ENCODE measurements at regions of chr15 and their contacts with region 1.

Region 1: GRCh38 chr15:90482124-90483011 is 47.4 kb upstream of the CRTC3 start:
- DNase-seq: peak in 30 of 35 experiments; percentile 7 to 68 (median 34)
- ATAC-seq: peak in 1 of 4 experiments; percentile 57
- H3K4me3 ChIP-seq: no peak overlapping the region
- H3K4me3 Mint-ChIP-seq: no peak overlapping the region
- H3K27ac ChIP-seq: no peak overlapping the region
- H3K27ac Mint-ChIP-seq: no peak overlapping the region
- H3K4me1 ChIP-seq: peaks cover 0 to 13% of the 10 kb centered on the region in 2 experiments
- H3K4me1 Mint-ChIP-seq: peaks cover 22 to 49% (median 35%) of the 10 kb centered on the region in 3 donors
- H3K27me3 ChIP-seq: no peaks in the 10 kb centered on the region
- H3K27me3 Mint-ChIP-seq: no peaks in the 10 kb centered on the region

Region 2: DNA sequence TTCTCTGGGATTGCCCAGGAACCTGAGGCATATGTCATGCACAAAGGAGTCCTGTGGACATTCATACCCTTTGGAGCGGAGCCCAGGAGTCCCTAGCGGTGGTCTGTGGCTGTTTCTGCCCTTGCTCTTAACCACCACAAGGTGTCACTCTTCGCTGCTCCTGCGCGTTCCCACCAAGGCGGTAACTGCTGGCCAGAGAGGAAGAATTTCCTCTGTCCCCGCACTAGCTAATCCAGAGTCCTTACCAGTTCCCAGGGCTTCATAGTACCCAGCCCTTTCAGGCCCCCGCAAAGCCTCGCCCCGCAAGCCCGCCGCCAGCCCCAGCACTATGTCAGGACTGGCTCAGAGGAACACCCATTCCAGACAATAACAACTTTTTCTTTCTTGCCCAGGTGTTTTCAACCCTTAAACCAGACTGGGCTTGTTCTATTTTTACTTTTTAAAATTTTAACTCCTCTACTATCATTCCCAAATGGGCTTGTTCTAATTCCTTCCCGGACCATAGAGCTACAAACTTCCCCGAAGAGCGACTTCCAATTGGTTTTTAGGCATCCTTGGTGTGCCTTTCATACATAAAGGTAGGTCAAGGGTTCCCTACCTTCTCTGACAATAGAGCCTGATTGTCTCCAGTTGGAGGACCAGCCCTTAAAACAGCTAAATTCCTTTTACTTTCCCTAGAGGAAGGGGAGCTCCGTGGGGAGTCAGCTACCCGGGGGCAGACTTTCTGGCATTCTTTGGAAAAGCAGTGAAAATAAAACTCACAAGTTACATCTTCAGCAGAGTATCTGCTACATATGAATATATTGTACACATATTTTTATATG is 162.1 kb before region 1 on chr15:
- CTCF ChIA-PET with region 1: interaction called, 15 to 42 read pairs
- POLR2A ChIA-PET with region 1: interaction called in 1 of 2 experiments, 7 read pairs
- DNase-seq: peak; percentile 24 to 87 (median 56)
- ATAC-seq: peak; percentile 96 to 99 (median 96)
- H3K4me3 ChIP-seq: peak overlapping the region in 1 of 2 donors; percentile 23
- H3K4me3 Mint-ChIP-seq: no peak overlapping the region
- H3K27ac ChIP-seq: no peak overlapping the region
- H3K27ac Mint-ChIP-seq: peak overlapping the region in 1 of 2 donors; percentile 17
- H3K4me1 ChIP-seq: peaks cover 4 to 6% of the 10 kb centered on the region in 2 experiments
- H3K4me1 Mint-ChIP-seq: peaks cover 6 to 11% (median 6%) of the 10 kb centered on the region in 3 donors
- H3K27me3 ChIP-seq: peaks cover 0 to 3% of the 10 kb centered on the region in 2 experiments
- H3K27me3 Mint-ChIP-seq: peaks cover 0 to 3% of the 10 kb centered on the region in 2 donors

Region 3: GRCh38 chr15:90362936-90363212 is 119.5 kb before region 1 on chr15:
- CTCF ChIA-PET with region 1: interaction called, 9 to 52 read pairs
- POLR2A ChIA-PET with region 1: no interaction called
- DNase-seq: no peak
- ATAC-seq: no peak
- H3K4me3 ChIP-seq: no peak overlapping the region
- H3K4me3 Mint-ChIP-seq: no peak overlapping the region
- H3K27ac ChIP-seq: no peak overlapping the region
- H3K27ac Mint-ChIP-seq: peak overlapping the region in 1 of 2 donors; percentile 44
- H3K4me1 ChIP-seq: peaks cover 11 to 14% of the 10 kb centered on the region in 2 experiments
- H3K4me1 Mint-ChIP-seq: peaks cover 15 to 26% (median 20%) of the 10 kb centered on the region in 3 donors
- H3K27me3 ChIP-seq: no peaks in the 10 kb centered on the region
- H3K27me3 Mint-ChIP-seq: no peaks in the 10 kb centered on the region

Region 4: GRCh38 chr15:90432253-90432652 is 50.1 kb before region 1 on chr15:
- CTCF ChIA-PET with region 1: no interaction called
- POLR2A ChIA-PET with region 1: no interaction called
- DNase-seq: no peak
- ATAC-seq: no peak
- H3K4me3 ChIP-seq: no peak overlapping the region
- H3K4me3 Mint-ChIP-seq: no peak overlapping the region
- H3K27ac ChIP-seq: no peak overlapping the region
- H3K27ac Mint-ChIP-seq: peak overlapping the region in 1 of 2 donors; percentile 12
- H3K4me1 ChIP-seq: no peaks in the 10 kb centered on the region
- H3K4me1 Mint-ChIP-seq: peaks cover 37 to 43% (median 38%) of the 10 kb centered on the region in 3 donors
- H3K27me3 ChIP-seq: no peaks in the 10 kb centered on the region
- H3K27me3 Mint-ChIP-seq: no peaks in the 10 kb centered on the region

Region 5: GRCh38 chr15:90665288-90666134 is 183.1 kb after region 1 on chr15:
- CTCF ChIA-PET with region 1: no interaction called
- POLR2A ChIA-PET with region 1: interaction called in 1 of 2 experiments, 10 read pairs
- DNase-seq: peak in 22 of 35 experiments; percentile 9 to 45 (median 21)
- ATAC-seq: peak; percentile 47 to 59 (median 52)
- H3K4me3 ChIP-seq: peak overlapping the region; percentile 65 to 74
- H3K4me3 Mint-ChIP-seq: peak overlapping the region; percentile 72 to 87 (median 74)
- H3K27ac ChIP-seq: peak overlapping the region; percentile 49
- H3K27ac Mint-ChIP-seq: peak overlapping the region in 1 of 2 donors; percentile 46
- H3K4me1 ChIP-seq: peaks cover 20 to 45% of the 10 kb centered on the region in 2 experiments
- H3K4me1 Mint-ChIP-seq: peaks cover 42 to 50% (median 50%) of the 10 kb centered on the region in 3 donors
- H3K27me3 ChIP-seq: peaks cover 0 to 41% of the 10 kb centered on the region in 2 experiments
- H3K27me3 Mint-ChIP-seq: peaks cover 0 to 13% of the 10 kb centered on the region in 2 donors

Region 6: GRCh38 chr15:90691982-90692773 is 209.8 kb after region 1 on chr15:
- CTCF ChIA-PET with region 1: interaction called in 1 of 2 experiments, 20 read pairs
- POLR2A ChIA-PET with region 1: no interaction called
- DNase-seq: no peak
- ATAC-seq: no peak
- H3K4me3 ChIP-seq: no peak overlapping the region
- H3K4me3 Mint-ChIP-seq: no peak overlapping the region
- H3K27ac ChIP-seq: no peak overlapping the region
- H3K27ac Mint-ChIP-seq: no peak overlapping the region
- H3K4me1 ChIP-seq: peaks cover 1 to 4% of the 10 kb centered on the region in 2 experiments
- H3K4me1 Mint-ChIP-seq: peaks cover 7 to 15% (median 8%) of the 10 kb centered on the region in 3 donors
- H3K27me3 ChIP-seq: no peaks in the 10 kb centered on the region
- H3K27me3 Mint-ChIP-seq: no peaks in the 10 kb centered on the region

Region 7: DNA sequence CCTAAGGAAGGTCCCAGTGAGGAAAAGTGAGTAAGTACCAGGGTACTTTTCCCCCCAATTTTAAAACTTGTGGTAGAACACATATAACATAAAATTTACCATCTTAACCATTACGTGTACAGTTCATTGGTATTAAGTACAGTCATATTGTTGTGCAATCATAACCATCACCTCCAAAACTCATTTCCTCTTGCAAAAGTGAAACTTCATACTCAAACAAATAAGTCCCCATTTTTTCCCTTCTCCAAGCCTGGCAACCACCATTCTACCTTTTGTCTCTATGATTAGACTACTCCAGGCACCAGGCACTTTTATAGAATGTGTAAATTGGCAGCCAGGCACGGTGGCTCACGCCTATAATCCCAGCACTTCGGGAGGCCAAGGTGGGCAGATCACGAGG is 499.8 kb after region 1 on chr15:
- CTCF ChIA-PET with region 1: interaction called in 1 of 2 experiments, 11 read pairs
- POLR2A ChIA-PET with region 1: no interaction called
- DNase-seq: no peak
- ATAC-seq: no peak
- H3K4me3 ChIP-seq: no peak overlapping the region
- H3K4me3 Mint-ChIP-seq: no peak overlapping the region
- H3K27ac ChIP-seq: no peak overlapping the region
- H3K27ac Mint-ChIP-seq: no peak overlapping the region
- H3K4me1 ChIP-seq: no peaks in the 10 kb centered on the region
- H3K4me1 Mint-ChIP-seq: peaks cover 0 to 11% (median 0%) of the 10 kb centered on the region in 3 donors
- H3K27me3 ChIP-seq: no peaks in the 10 kb centered on the region
- H3K27me3 Mint-ChIP-seq: no peaks in the 10 kb centered on the region

Region 8: GRCh38 chr15:91278791-91279404 is 796.5 kb after region 1 on chr15:
- CTCF ChIA-PET with region 1: no interaction called
- POLR2A ChIA-PET with region 1: no interaction called
- DNase-seq: no peak
- ATAC-seq: no peak
- H3K4me3 ChIP-seq: no peak overlapping the region
- H3K4me3 Mint-ChIP-seq: no peak overlapping the region
- H3K27ac ChIP-seq: no peak overlapping the region
- H3K27ac Mint-ChIP-seq: no peak overlapping the region
- H3K4me1 ChIP-seq: no peaks in the 10 kb centered on the region
- H3K4me1 Mint-ChIP-seq: no peaks in the 10 kb centered on the region
- H3K27me3 ChIP-seq: peaks cover 0 to 8% of the 10 kb centered on the region in 2 experiments
- H3K27me3 Mint-ChIP-seq: peaks cover 15 to 29% of the 10 kb centered on the region in 2 donors

Measured in T-cell (primary cell).